Tibial artery (tissue), 4 donors: ENCODE measurements at regions of chr15 and their contacts with region 1.

Region 1: GRCh38 chr15:40323239-40323952 is at the start of gene INAFM2:
- DNase-seq: peak; percentile 84 to 97
- H3K4me3 ChIP-seq: peak within 1 kb of the TSS; percentile 75 to 97
- H3K27ac ChIP-seq: peak within 1 kb of the TSS; percentile 90 to 92
- H3K4me1 ChIP-seq: peaks cover 0 to 53% (median 41%) of the 10 kb centered on the region in 4 donors
- H3K27me3 ChIP-seq: no peaks in the 10 kb centered on the region
- CTCF ChIP-seq: peak; percentile 77

Region 2: GRCh38 chr15:40340740-40341400 is 17.5 kb after region 1 on chr15 and contains the start of gene CCDC9B:
- intact Hi-C with region 1: loop called (anchors 1 kb)
- DNase-seq: peak; percentile 92 to 99
- H3K4me3 ChIP-seq: peak within 1 kb of the TSS; percentile 35 to 43
- H3K27ac ChIP-seq: peak within 1 kb of the TSS; percentile 90
- H3K4me1 ChIP-seq: peaks cover 3 to 93% (median 90%) of the 10 kb centered on the region in 4 donors
- H3K27me3 ChIP-seq: no peaks in the 10 kb centered on the region
- CTCF ChIP-seq: no peak

Region 3: DNA sequence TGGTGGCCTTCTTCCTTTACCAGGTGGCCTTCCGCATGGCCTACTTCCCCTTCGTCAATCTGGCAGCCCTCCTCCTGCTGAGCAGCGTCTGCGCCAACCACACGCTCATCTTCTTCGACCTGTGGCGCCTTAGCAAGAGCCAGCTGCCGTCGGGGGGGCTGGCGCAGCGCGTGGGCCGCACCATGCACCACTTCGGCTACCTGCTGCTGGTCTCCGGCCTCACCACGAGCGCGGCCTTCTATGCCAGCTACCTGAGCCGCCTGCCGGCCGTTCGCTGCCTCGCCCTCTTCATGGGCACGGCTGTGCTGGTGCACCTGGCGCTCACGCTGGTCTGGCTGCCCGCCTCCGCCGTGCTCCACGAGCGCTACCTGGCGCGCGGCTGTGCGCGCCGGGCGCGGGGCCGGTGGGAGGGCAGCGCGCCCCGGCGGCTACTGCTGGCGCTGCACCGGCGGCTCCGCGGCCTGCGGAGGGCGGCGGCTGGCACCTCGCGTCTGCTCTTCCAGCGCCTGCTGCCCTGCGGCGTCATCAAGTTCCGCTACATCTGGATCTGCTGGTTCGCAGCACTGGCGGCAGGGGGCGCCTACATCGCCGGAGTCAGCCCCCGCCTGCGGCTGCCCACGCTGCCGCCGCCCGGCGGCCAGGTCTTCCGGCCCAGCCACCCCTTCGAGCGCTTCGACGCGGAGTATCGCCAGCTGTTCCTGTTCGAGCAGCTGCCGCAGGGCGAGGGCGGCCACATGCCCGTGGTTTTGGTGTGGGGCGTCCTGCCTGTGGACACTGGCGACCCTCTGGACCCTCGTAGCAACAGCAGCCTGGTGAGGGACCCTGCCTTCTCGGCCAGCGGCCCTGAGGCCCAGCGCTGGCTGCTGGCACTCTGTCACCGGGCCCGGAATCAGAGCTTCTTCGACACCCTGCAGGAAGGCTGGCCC is 44.6 kb after region 1 on chr15:
- intact Hi-C with region 1: loop called (anchors 2 kb)
- DNase-seq: peak; percentile 74 to 91
- H3K4me3 ChIP-seq: peak overlapping the region; percentile 36 to 48
- H3K27ac ChIP-seq: peak overlapping the region; percentile 29 to 48
- H3K4me1 ChIP-seq: peaks cover 0 to 21% (median 17%) of the 10 kb centered on the region in 4 donors
- H3K27me3 ChIP-seq: no peaks in the 10 kb centered on the region
- CTCF ChIP-seq: peak; percentile 85 to 94